Esophagus muscularis mucosa (tissue), 4 donors: ENCODE measurements at regions of chr14 and their contacts with region 1.

Region 1: GRCh38 chr14:61456720-61457119 is 135.3 kb downstream of the PRKCH start:
- DNase-seq: peak; percentile 96
- H3K4me3 ChIP-seq: no peak overlapping the region
- H3K27ac ChIP-seq: no peak overlapping the region
- H3K4me1 ChIP-seq: peaks cover 0 to 13% (median 10%) of the 10 kb centered on the region in 4 donors
- H3K27me3 ChIP-seq: no peaks in the 10 kb centered on the region
- CTCF ChIP-seq: peak; percentile 80 to 88 (median 86)
- EP300 ChIP-seq: no peak
- POLR2A ChIP-seq: no peak

Region 2: GRCh38 chr14:62126879-62127478 is 670.3 kb after region 1 on chr14:
- intact Hi-C with region 1: loop called (anchors 10 kb)
- DNase-seq: no peak
- H3K4me3 ChIP-seq: no peak overlapping the region
- H3K27ac ChIP-seq: no peak overlapping the region
- H3K4me1 ChIP-seq: no peaks in the 10 kb centered on the region
- H3K27me3 ChIP-seq: peaks cover 0 to 21% (median 0%) of the 10 kb centered on the region in 4 donors
- CTCF ChIP-seq: peak; percentile 38 to 75 (median 55)
- EP300 ChIP-seq: no peak
- POLR2A ChIP-seq: no peak